Breast epithelium (tissue), 4 donors: ENCODE measurements at regions of chr5 and their contacts with region 1.

Region 1: DNA sequence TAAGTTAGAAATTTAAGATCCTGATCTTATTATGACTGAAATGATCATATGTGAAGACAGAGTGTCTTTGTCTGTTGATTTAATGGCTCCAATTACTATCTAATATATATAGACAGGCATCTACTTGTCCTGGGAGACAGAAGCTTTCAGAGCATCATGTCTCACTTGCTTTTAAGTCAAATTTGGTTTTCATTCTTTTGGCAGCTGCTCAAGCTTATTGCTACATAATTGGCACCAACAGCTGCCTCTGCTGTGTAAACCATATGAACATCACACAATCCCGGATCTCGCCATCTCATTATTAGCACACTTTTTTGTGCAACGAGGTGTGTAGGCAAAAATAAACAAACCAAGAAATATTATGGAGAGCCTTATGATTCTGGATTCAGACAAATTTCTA is 1717.9 kb downstream of the EFNA5 start:
- DNase-seq: no peak
- H3K4me3 ChIP-seq: no peak overlapping the region
- H3K27ac ChIP-seq: no peak overlapping the region
- H3K4me1 ChIP-seq: no peaks in the 10 kb centered on the region
- H3K27me3 ChIP-seq: no peaks in the 10 kb centered on the region
- CTCF ChIP-seq: no peak
- POLR2A ChIP-seq: no peak

Region 2: DNA sequence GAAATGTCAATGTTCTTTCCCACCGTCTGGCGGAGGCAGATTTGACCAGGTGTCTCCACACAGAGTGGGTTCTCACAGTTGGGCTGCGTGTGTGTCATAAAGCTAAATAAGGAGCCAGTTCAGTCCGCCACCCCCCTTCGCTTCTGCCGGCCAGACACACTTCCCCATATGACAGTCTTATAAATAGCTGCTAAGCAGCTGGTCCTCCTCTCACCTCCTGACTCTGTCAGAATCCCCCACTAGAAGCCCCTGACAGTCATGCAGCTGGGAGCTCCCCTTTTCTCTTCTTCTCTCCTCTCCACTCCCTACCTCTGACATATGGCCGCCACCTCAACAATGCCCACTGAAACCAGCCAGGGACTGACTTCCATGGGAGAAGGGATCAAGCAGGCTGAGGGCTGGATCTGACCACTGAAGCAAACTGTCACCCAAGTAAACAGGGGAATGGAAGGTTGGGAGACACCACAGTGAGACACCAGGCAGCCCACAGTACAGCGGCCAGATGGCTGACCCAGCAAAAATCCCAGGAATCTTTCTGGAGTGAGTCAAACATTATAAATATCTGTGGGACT is 1859.8 kb after region 1 on chr5:
- intact Hi-C with region 1: loop called (anchors 10 kb)
- DNase-seq: no peak
- H3K4me3 ChIP-seq: no peak overlapping the region
- H3K27ac ChIP-seq: no peak overlapping the region
- H3K4me1 ChIP-seq: no peaks in the 10 kb centered on the region
- H3K27me3 ChIP-seq: no peaks in the 10 kb centered on the region
- CTCF ChIP-seq: no peak
- POLR2A ChIP-seq: no peak